ENCODE measurements at regions of chr4 and their contacts with region 1.

Region 1: GRCh38 chr4:153535772-153536513 is 69.8 kb downstream of the TMEM131L start:
- DNase-seq: no peak
- ATAC-seq: peak; percentile 31
- H3K4me3 Mint-ChIP-seq: no peak overlapping the region
- H3K27ac Mint-ChIP-seq: peak overlapping the region; percentile 72
- H3K4me1 Mint-ChIP-seq: peaks cover 89% of the 10 kb centered on the region
- H3K27me3 Mint-ChIP-seq: no peaks in the 10 kb centered on the region

Region 2: DNA sequence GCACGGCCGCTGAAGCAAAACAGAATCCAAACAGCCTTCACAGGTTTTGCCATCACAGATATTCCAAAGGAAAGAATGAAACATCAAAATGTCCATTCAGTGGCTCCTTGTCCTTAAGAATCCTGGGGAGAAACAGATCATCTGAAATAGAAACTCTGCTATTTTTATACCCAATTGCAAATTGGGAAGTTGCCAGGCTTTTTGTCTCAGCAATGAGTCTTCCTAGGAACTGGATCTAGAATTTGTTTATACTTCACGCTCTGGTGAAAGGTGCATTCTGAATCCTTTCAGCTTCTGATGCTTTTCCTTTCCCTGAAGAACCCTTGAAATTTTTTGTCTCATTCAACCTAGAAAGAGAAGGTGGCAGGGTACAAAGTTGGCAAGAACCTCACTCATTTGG is 1219.0 kb before region 1 on chr4:
- CTCF ChIA-PET with region 1: no interaction called
- POLR2A ChIA-PET with region 1: no interaction called
- intact Hi-C with region 1: no loop called
- DNase-seq: no peak
- ATAC-seq: no peak
- H3K4me3 Mint-ChIP-seq: no peak overlapping the region
- H3K27ac Mint-ChIP-seq: no peak overlapping the region
- H3K4me1 Mint-ChIP-seq: no peaks in the 10 kb centered on the region
- H3K27me3 Mint-ChIP-seq: no peaks in the 10 kb centered on the region

Region 3: DNA sequence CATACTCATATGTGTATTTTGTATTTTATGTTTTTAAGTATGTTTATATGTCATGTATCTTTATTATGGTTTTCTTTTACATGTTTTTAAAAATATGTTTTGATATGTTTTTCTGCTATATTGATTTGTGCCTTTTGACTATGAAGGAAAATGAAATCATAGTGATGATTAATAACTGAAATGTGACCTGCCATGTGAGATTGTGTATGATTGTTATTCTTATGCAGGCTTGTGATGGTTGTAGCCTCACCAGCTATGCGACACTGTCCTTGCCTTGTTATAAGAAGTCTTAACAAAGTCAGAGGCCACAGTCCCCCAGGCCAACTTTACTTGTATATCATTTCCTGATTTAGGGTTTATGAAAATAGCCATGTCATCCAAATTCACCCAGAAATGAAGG is 13.5 kb after region 1 on chr4:
- CTCF ChIA-PET with region 1: interaction called, 19 read pairs
- POLR2A ChIA-PET with region 1: interaction called, 3 read pairs
- intact Hi-C with region 1: no loop called
- DNase-seq: peak; percentile 46
- ATAC-seq: peak; percentile 92
- H3K4me3 Mint-ChIP-seq: no peak overlapping the region
- H3K27ac Mint-ChIP-seq: peak overlapping the region; percentile 47
- H3K4me1 Mint-ChIP-seq: peaks cover 50% of the 10 kb centered on the region
- H3K27me3 Mint-ChIP-seq: no peaks in the 10 kb centered on the region

Region 4: GRCh38 chr4:153713866-153714646 is 178.1 kb after region 1 on chr4:
- CTCF ChIA-PET with region 1: no interaction called
- POLR2A ChIA-PET with region 1: no interaction called
- intact Hi-C with region 1: no loop called
- DNase-seq: no peak
- ATAC-seq: no peak
- H3K4me3 Mint-ChIP-seq: no peak overlapping the region
- H3K27ac Mint-ChIP-seq: no peak overlapping the region
- H3K4me1 Mint-ChIP-seq: no peaks in the 10 kb centered on the region
- H3K27me3 Mint-ChIP-seq: peaks cover 2% of the 10 kb centered on the region

Measured in activated CD4-positive, alpha-beta T cell treated with anti-CD3 and anti-CD28 coated beads for 36 hours (primary cell).